Activated B cell treated with CpG ODN at 0.5 μM for 24 hours (primary cell): ENCODE measurements at regions of chr1 and their contacts with region 1.

Region 1: DNA sequence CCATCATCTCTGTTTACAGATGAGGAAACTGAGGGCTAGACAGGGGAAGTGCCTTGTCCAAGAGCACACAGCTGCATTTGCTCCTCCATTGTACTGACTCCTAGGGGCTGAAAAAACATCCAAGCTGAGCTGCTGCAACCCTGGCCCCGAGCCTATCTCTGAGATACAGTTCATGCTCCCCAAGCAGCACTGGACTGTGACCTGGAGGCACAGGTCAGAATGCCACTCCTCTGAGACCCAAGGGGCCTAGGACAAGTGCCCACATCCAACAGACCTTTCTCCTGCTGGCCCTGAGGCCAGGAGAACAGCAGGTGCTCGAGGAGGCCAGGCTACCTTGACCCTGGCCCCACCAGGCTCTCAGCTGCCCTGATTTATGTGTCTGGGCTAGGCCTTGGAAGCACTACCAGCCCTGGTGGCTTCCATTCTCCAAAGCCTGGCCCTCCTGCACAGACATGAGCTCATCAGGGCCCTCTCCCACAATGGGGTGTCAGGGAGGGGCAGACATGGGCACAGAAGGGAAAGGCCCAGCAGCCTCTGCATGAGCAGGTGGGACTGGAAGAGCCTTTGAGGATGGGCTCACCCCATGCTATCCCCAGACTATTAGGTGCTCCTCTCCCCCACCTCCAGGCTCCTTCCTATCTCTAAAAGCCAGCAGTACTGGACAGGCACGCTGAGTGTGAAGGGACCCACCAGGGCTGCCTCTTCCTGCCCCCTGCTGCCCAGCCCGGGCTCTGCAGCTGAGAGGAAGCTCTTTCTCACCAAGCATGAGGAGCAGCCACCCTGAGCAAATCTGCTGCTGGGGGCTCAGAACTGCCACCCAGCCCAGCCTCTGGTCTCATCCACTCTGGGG is 18.8 kb downstream of the ADGRB2 start:
- DNase-seq: no peak
- ATAC-seq: peak; percentile 64
- H3K4me3 Mint-ChIP-seq: no peak overlapping the region
- H3K27ac Mint-ChIP-seq: no peak overlapping the region
- H3K4me1 Mint-ChIP-seq: peaks cover 37% of the 10 kb centered on the region
- H3K27me3 Mint-ChIP-seq: peaks cover 4% of the 10 kb centered on the region
- CTCF ChIP-seq: no peak

Region 2: DNA sequence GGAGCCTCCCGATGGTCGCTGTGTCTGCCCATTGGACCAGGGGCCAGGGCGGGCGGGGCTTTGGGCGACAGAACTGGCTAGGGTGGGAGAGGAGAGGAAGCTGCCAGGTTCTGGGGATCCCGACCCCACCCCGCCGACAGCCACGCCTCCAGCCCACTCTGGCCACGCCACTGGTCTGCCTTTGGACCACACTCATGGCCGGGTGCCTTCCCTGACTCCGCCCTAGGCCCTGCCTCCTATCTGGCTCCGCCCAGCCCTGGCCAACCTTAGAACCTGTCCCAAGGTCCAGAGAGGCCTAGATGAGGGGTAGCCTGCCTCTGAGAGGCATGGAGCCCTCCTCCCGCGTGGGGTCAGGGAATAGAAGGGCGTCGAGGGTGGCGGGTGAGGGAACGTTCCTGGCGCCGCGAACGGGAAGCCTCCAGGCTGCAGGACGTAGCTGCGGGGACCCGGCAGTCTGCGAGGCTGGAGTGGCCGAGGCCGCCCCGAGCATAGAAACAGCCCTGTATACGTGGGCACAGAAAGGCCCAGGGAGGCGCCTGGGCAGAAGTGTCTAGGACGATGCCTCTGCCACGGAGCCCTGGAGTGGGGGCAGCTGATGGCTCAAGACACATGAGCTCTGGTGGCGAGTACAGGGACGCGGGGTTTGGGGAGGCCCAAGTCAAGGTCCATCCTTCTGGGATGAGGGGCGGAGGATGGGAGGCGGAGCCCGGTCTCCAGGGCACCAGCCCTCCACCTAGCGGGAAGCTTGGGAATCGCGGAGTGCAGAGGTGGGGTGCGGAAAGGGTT is 30.0 kb before region 1 on chr1:
- CTCF ChIA-PET with region 1: interaction called, 4 read pairs
- POLR2A ChIA-PET with region 1: no interaction called
- intact Hi-C with region 1: loop called (anchors 2 kb)
- DNase-seq: peak; percentile 33
- ATAC-seq: peak; percentile 74
- H3K4me3 Mint-ChIP-seq: peak overlapping the region; percentile 77
- H3K27ac Mint-ChIP-seq: no peak overlapping the region
- H3K4me1 Mint-ChIP-seq: peaks cover 13% of the 10 kb centered on the region
- H3K27me3 Mint-ChIP-seq: peaks cover 47% of the 10 kb centered on the region
- CTCF ChIP-seq: no peak